Endothelial cell of umbilical vein (primary cell): ENCODE measurements at regions of chr11 and their contacts with region 1.

Region 1: DNA sequence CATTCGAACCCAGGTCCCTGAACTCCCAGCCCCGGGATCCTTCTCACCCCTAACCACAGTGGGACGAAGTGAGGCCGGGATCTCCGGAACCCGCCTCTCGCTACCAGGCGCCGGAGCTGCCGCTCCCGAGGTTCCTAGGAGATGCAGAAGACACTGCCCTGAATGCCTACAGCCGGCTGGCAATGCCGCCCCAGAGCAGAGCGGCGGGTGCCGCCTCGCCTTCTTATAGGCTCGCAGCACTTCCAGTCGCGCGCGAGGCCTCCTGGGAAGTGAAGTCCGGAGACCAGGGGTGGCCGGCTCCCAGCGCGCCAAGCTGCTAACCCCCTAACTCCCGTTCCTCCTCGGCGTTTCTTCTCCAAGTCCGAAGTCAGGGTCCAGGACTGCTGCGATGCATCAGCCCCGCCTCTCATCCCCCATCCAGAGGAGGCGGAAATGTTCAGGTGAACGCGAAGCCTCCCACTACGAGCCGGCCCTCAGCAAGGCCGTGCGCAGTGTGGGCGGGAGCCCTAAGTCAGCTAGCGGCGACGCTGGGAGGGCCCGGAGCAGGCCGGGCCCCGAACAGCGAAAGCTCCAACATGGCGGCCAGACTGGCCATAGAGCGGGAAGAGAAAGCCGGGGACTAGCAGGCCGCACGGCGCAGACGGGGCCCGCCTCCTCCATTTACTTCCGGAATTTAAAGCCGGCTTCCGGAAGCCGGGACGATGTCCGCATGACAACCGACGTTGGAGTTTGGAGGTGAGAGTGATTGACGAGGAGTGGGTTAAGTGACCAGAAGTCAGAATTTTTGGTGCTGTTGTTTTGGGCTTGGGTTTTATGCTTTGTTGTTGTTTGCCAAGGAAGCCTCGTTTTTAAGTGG is at the starts of genes CYB561A3 and TMEM138:
- DNase-seq: peak; percentile 94
- H3K4me3 ChIP-seq: peak within 1 kb of the TSS; percentile 53 to 83 (median 76)
- H3K27ac ChIP-seq: peak within 1 kb of the TSS; percentile 63
- H3K4me1 ChIP-seq: peaks cover 18% of the 10 kb centered on the region
- H3K27me3 ChIP-seq: no peaks in the 10 kb centered on the region
- CTCF ChIP-seq: no peak
- POLR2A ChIP-seq: peak; percentile 97
- total RNA-seq, gene CYB561A3: 41.6 and 44.0 TPM in 2 replicates
- total RNA-seq, gene TMEM138: 37.9 and 43.6 TPM in 2 replicates

Region 2: DNA sequence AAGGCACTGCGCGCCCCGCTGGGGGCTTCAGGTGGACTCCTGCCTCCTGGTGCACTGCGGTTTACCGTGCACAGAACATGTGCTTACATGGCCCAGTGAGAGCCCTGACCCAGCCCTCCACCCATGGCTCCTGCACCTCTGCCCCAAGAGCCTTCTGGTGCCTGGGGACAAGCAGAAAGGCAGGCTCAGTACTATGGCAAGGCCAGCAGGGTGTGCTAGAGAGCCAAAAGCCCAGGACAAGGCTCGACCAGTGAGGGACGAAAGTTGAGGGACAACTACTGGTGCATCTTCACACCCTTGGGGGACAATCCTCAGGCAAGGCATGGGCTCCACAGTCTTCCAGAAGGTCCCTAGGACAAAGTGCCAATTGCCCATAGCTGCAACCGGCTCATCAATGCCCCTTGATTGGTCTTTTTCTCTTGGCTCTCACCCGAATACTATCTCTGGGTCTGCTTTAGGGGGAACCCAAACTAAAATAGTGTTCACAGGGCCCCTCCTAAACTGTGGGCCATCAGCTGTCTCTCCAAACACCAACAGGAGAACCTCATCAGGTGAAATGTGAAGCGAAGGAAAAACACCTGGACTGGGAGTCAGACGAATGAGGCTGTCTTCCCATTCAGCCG is 107.4 kb before region 1 on chr11:
- CTCF ChIA-PET with region 1: no interaction called
- POLR2A ChIA-PET with region 1: no interaction called
- dilution Hi-C with region 1: no loop called
- intact Hi-C with region 1: no loop called
- DNase-seq: peak; percentile 61
- H3K4me3 ChIP-seq: no peak overlapping the region
- H3K27ac ChIP-seq: no peak overlapping the region
- H3K4me1 ChIP-seq: no peaks in the 10 kb centered on the region
- H3K27me3 ChIP-seq: peaks cover 0 to 1% of the 10 kb centered on the region in 2 experiments
- CTCF ChIP-seq: peak; percentile 75 to 96
- POLR2A ChIP-seq: no peak

Region 3: GRCh38 chr11:61270354-61271076 is 91.4 kb before region 1 on chr11:
- CTCF ChIA-PET with region 1: no interaction called
- POLR2A ChIA-PET with region 1: no interaction called
- dilution Hi-C with region 1: no loop called
- intact Hi-C with region 1: no loop called
- DNase-seq: no peak
- H3K4me3 ChIP-seq: no peak overlapping the region
- H3K27ac ChIP-seq: no peak overlapping the region
- H3K4me1 ChIP-seq: no peaks in the 10 kb centered on the region
- H3K27me3 ChIP-seq: no peaks in the 10 kb centered on the region
- CTCF ChIP-seq: no peak
- POLR2A ChIP-seq: no peak

Region 4: DNA sequence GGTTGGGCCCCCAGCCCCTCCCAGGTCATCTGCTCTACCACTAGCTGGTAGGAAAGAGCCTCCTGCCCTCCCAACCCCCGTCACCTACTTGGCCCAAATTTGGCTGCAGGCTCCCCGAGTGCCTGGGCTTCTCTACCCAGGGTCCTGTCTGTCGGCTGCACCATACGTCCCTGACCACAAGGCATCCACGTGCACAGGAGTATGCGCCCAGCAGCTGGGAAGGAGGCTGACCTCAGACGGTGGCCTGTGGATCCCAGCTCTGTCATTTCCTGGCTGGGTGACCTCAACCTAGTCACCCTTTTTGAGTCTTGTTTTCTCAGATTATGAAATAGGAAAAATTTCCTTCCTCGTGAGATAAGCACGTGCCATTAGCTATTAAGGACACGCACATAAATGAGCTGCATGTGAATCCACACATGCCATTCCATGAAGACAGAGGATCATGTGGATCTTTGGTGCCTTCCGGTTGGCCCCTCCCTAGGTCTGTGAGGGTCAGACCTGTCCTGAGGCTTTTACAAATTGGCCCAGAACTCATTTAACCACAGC is 13.9 kb before region 1 on chr11:
- CTCF ChIA-PET with region 1: interaction called, 10 read pairs
- POLR2A ChIA-PET with region 1: interaction called, 17 read pairs
- dilution Hi-C with region 1: no loop called
- intact Hi-C with region 1: loop called (anchors 1 kb)
- DNase-seq: peak; percentile 92
- H3K4me3 ChIP-seq: no peak overlapping the region
- H3K27ac ChIP-seq: peak overlapping the region; percentile 58
- H3K4me1 ChIP-seq: peaks cover 14% of the 10 kb centered on the region
- H3K27me3 ChIP-seq: no peaks in the 10 kb centered on the region
- CTCF ChIP-seq: peak in 1 of 2 donors; percentile 35
- POLR2A ChIP-seq: peak; percentile 69

Region 5: DNA sequence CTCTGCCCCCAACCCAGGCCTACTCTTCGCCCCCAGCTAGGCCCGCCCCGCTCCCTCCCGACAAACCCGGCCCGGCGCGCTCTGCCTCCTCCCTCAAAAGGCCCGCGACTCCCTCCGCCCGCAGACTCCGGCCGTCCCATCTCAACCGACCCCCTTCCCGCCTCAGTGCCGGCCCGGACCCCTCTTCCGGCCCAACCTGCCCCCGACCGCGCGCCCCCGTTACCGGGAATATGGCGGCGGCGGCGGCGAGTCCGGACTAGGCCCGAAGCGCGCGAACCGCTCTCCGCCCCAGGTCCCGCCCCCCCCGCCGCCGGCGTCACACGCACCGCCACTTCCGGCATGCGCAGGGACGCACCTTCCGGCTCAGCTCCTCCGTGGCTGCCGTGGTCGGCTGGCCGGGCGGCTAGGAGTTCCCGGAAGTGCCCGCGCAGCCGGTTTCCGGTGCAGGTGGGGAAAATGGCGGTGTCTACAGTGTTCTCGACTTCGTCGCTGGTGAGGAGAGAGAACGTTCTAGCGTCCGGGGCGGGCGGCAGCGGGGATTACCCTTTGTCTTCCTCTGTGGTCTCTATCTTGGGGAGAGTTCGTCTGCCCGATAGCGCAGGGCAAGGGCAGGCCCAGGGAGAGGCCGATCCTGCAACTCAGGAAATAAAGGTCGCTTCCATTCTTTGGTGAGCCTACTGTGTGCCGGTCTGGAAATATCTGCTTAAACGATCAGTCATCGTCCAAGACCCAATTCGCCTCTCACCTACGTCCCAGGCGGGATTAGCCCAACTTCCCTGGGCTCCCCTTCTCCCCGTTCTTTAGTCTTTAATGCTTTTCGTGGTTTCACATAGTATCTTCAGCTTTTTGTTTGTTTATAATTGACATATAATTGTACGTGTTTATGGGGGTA is 68.0 kb after region 1 on chr11 and contains the starts of genes CPSF7 and SDHAF2:
- CTCF ChIA-PET with region 1: interaction called, 4 read pairs
- POLR2A ChIA-PET with region 1: no interaction called
- dilution Hi-C with region 1: no loop called
- intact Hi-C with region 1: loop called (anchors 2 kb)
- DNase-seq: peak; percentile 94
- H3K4me3 ChIP-seq: peak within 1 kb of the TSS; percentile 87 to 100 (median 100)
- H3K27ac ChIP-seq: peak within 1 kb of the TSS; percentile 99
- H3K4me1 ChIP-seq: peaks cover 20% of the 10 kb centered on the region
- H3K27me3 ChIP-seq: no peaks in the 10 kb centered on the region
- CTCF ChIP-seq: no peak
- POLR2A ChIP-seq: peak; percentile 91
- total RNA-seq, gene CPSF7: 77.0 and 78.2 TPM in 2 replicates
- total RNA-seq, gene SDHAF2: 40.3 and 44.5 TPM in 2 replicates